Head of caudate nucleus (tissue), 42 donors: ENCODE measurements at regions of chr7 and their contacts with region 1.

Region 1: GRCh38 chr7:79302293-79302692 is 151.2 kb downstream of the MAGI2 start:
- DNase-seq: no peak

Region 2: GRCh38 chr7:79452032-79452494 is 149.8 kb after region 1 on chr7:
- intact Hi-C with region 1: loop called (anchors 5 kb)
- DNase-seq: peak; percentile 86 to 97 (median 92)